Naive thymus-derived CD4-positive, alpha-beta T cell (primary cell): ENCODE measurements at regions of chr11 and their contacts with region 1.

Region 1: DNA sequence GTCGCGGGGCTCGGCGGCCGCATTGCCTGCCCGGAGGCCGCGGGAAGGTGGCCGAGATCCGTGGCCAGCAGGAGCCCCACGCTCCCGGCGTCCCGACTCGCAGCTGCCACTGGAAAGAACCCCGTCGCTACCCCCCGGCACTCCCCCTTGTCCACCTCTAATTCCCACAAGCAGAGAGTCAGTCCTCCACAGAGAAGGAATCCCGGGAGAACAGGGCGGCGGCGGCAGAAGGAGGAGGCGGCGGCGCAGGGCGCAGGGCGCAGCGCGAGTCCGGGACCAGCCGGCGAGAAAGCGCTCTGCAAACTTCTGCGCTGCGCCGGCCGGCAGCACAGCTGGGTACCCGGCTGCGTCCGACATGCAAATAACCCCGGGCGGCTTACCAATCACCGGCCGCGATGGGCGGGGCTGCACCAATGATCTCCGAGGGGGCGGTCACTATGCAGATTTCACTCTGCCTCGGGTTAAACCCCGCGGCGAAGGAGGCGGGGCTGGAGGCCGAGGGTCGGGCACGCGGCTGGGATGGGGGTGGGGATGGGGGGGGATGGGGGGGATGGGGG is at the start of gene ABTB2:
- DNase-seq: peak; percentile 90 to 97 (median 97)
- ATAC-seq: peak; percentile 96
- H3K4me3 ChIP-seq: peak within 1 kb of the TSS; percentile 67
- H3K4me3 Mint-ChIP-seq: peak within 1 kb of the TSS; percentile 81 to 96 (median 88)
- H3K27ac ChIP-seq: peak within 1 kb of the TSS; percentile 55
- H3K27ac Mint-ChIP-seq: peak within 1 kb of the TSS; percentile 28 to 94 (median 90)
- H3K4me1 ChIP-seq: peaks cover 8 to 10% of the 10 kb centered on the region in 2 donors
- H3K4me1 Mint-ChIP-seq: peaks cover 8 to 28% (median 21%) of the 10 kb centered on the region in 7 donors
- H3K27me3 ChIP-seq: peaks cover 7 to 13% of the 10 kb centered on the region in 2 donors
- H3K27me3 Mint-ChIP-seq: peaks cover 26 to 59% (median 36%) of the 10 kb centered on the region in 5 donors
- total RNA-seq, gene ABTB2: 0.22 to 5.3 (median 0.61) TPM

Region 2: GRCh38 chr11:33736148-33736809 is 621.5 kb before region 1 on chr11 and contains the start of gene CD59:
- CTCF ChIA-PET with region 1: no interaction called
- POLR2A ChIA-PET with region 1: no interaction called
- intact Hi-C with region 1: loop called in 1 of 2 experiments (anchors 10 kb)
- DNase-seq: peak; percentile 75 to 94 (median 85)
- ATAC-seq: peak; percentile 92
- H3K4me3 ChIP-seq: peak within 1 kb of the TSS; percentile 76
- H3K4me3 Mint-ChIP-seq: peak within 1 kb of the TSS; percentile 87 to 97 (median 92)
- H3K27ac ChIP-seq: peak within 1 kb of the TSS; percentile 72
- H3K27ac Mint-ChIP-seq: peak within 1 kb of the TSS; percentile 79 to 94 (median 86)
- H3K4me1 ChIP-seq: peaks cover 9 to 17% of the 10 kb centered on the region in 2 donors
- H3K4me1 Mint-ChIP-seq: peaks cover 21 to 41% (median 36%) of the 10 kb centered on the region in 7 donors
- H3K27me3 ChIP-seq: no peaks in the 10 kb centered on the region
- H3K27me3 Mint-ChIP-seq: peaks cover 0 to 11% (median 0%) of the 10 kb centered on the region in 5 donors
- total RNA-seq, gene CD59: 23.3 to 152 (median 62.7) TPM

Region 3: GRCh38 chr11:33996498-33997454 is 361.0 kb before region 1 on chr11:
- CTCF ChIA-PET with region 1: interaction called, 10 read pairs
- POLR2A ChIA-PET with region 1: interaction called, 6 read pairs
- intact Hi-C with region 1: loop called (anchors 1 kb)
- DNase-seq: peak; percentile 42 to 79 (median 71)
- ATAC-seq: peak; percentile 99
- H3K4me3 ChIP-seq: no peak overlapping the region
- H3K4me3 Mint-ChIP-seq: peak overlapping the region in 7 of 10 donors; percentile 31 to 74 (median 59)
- H3K27ac ChIP-seq: no peak overlapping the region
- H3K27ac Mint-ChIP-seq: no peak overlapping the region
- H3K4me1 ChIP-seq: peaks cover 0 to 3% of the 10 kb centered on the region in 2 donors
- H3K4me1 Mint-ChIP-seq: peaks cover 0 to 10% (median 9%) of the 10 kb centered on the region in 7 donors
- H3K27me3 ChIP-seq: peaks cover 0 to 5% of the 10 kb centered on the region in 2 donors
- H3K27me3 Mint-ChIP-seq: peaks cover 12 to 33% (median 18%) of the 10 kb centered on the region in 5 donors

Region 4: GRCh38 chr11:34174412-34175041 is 183.3 kb before region 1 on chr11:
- CTCF ChIA-PET with region 1: interaction called, 26 read pairs
- POLR2A ChIA-PET with region 1: interaction called, 22 read pairs
- intact Hi-C with region 1: loop called (anchors 1 kb)
- DNase-seq: peak; percentile 60 to 83 (median 73)
- ATAC-seq: peak; percentile 99
- H3K4me3 ChIP-seq: no peak overlapping the region
- H3K4me3 Mint-ChIP-seq: peak overlapping the region; percentile 21 to 81 (median 67)
- H3K27ac ChIP-seq: no peak overlapping the region
- H3K27ac Mint-ChIP-seq: no peak overlapping the region
- H3K4me1 ChIP-seq: peaks cover 0 to 4% of the 10 kb centered on the region in 2 donors
- H3K4me1 Mint-ChIP-seq: peaks cover 0 to 21% (median 4%) of the 10 kb centered on the region in 7 donors
- H3K27me3 ChIP-seq: no peaks in the 10 kb centered on the region
- H3K27me3 Mint-ChIP-seq: peaks cover 0 to 6% (median 0%) of the 10 kb centered on the region in 5 donors

Region 5: DNA sequence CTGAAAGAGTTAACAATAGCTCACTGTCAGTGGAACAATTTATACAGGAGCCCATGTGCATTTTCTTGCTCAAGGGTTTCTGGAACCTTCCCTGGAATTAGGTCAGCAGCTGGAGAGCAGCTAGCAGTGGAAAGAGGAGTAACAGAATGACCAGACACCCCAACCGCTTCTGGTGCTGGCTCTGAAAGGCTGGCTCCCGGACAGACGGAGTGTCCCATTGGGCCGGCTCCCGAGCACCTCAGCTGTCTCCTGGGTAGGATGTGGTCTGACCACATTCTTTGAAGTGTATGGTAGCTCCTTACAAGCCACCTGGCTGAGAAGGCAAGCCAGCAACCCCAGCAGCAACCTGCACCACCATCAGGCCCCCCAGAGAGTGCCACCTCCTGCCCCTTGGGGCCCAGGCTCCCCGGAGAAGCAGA is 44.7 kb before region 1 on chr11:
- CTCF ChIA-PET with region 1: interaction called, 3 read pairs
- POLR2A ChIA-PET with region 1: interaction called, 3 read pairs
- intact Hi-C with region 1: loop called in 1 of 2 experiments (anchors 5 kb)
- DNase-seq: peak in 6 of 9 donors; percentile 19 to 49 (median 28)
- ATAC-seq: no peak
- H3K4me3 ChIP-seq: no peak overlapping the region
- H3K4me3 Mint-ChIP-seq: peak overlapping the region in 4 of 10 donors; percentile 9 to 56 (median 38)
- H3K27ac ChIP-seq: no peak overlapping the region
- H3K27ac Mint-ChIP-seq: no peak overlapping the region
- H3K4me1 ChIP-seq: peaks cover 0 to 14% of the 10 kb centered on the region in 2 donors
- H3K4me1 Mint-ChIP-seq: peaks cover 14 to 43% (median 34%) of the 10 kb centered on the region in 7 donors
- H3K27me3 ChIP-seq: no peaks in the 10 kb centered on the region
- H3K27me3 Mint-ChIP-seq: peaks cover 0 to 8% (median 0%) of the 10 kb centered on the region in 5 donors

Region 6: DNA sequence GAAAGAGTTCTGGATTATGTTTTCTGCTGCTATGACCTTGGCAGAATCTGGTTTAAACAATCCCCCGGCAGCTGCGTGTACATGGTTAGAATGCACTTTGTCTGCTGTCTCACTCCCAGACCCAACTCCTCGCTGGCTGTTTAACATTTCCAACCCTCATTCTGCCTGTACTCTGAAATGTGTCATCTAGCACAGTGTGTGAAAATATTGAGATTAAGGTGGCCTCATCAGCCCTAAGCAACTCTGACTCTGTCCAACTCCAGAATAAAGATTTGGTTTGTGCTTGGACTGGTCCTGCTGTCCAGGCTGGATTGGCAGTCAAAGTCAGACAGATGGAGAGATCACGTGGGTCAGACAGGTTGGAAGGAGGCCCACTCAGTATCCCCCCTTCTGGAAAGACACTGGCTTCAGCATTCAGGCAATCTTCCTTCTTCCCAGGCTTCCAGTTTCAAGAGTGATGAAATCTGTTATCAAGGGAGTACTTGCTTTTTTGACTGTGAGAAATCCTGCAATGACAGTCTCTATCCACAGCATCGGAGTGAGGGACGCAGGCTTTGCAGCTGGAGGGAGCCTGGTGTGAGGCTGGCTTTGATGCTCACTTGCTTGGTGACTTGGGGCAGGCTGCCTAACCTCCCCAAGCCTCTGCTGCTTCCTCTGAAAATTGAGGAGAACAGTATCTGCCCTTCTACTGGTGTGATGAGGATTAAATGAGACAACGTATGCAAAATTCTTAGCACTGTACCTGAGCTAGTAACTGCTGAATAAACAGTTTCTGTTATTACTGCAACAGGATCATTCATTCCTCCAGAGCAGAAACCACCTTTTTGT is 29.8 kb before region 1 on chr11:
- CTCF ChIA-PET with region 1: no interaction called
- POLR2A ChIA-PET with region 1: no interaction called
- intact Hi-C with region 1: no loop called
- DNase-seq: no peak
- ATAC-seq: no peak
- H3K4me3 ChIP-seq: no peak overlapping the region
- H3K4me3 Mint-ChIP-seq: no peak overlapping the region
- H3K27ac ChIP-seq: no peak overlapping the region
- H3K27ac Mint-ChIP-seq: no peak overlapping the region
- H3K4me1 ChIP-seq: no peaks in the 10 kb centered on the region
- H3K4me1 Mint-ChIP-seq: no peaks in the 10 kb centered on the region
- H3K27me3 ChIP-seq: no peaks in the 10 kb centered on the region
- H3K27me3 Mint-ChIP-seq: peaks cover 0 to 44% (median 8%) of the 10 kb centered on the region in 5 donors